ENCODE measurements at regions of chr13 and their contacts with region 1.

Region 1: GRCh38 chr13:50911937-50912795 is 2.6 kb downstream of the RNASEH2B start:
- DNase-seq: peak; percentile 82
- ATAC-seq: peak; percentile 58
- H3K4me3 Mint-ChIP-seq: peak overlapping the region; percentile 93
- H3K27ac Mint-ChIP-seq: peak overlapping the region; percentile 97
- H3K4me1 Mint-ChIP-seq: peaks cover 71% of the 10 kb centered on the region
- H3K27me3 Mint-ChIP-seq: no peaks in the 10 kb centered on the region
- CTCF ChIP-seq: no peak

Region 2: GRCh38 chr13:49792550-49793324 is 1119.4 kb before region 1 on chr13 and contains the start of gene KPNA3:
- CTCF ChIA-PET with region 1: interaction called, 3 read pairs
- POLR2A ChIA-PET with region 1: interaction called, 3 read pairs
- intact Hi-C with region 1: loop called (anchors 2 kb)
- DNase-seq: peak; percentile 88
- ATAC-seq: peak; percentile 89
- H3K4me3 Mint-ChIP-seq: peak within 1 kb of the TSS; percentile 97
- H3K27ac Mint-ChIP-seq: peak within 1 kb of the TSS; percentile 97
- H3K4me1 Mint-ChIP-seq: peaks cover 31% of the 10 kb centered on the region
- H3K27me3 Mint-ChIP-seq: no peaks in the 10 kb centered on the region
- CTCF ChIP-seq: no peak
- total RNA-seq, gene KPNA3: 28.6 and 28.7 TPM in 2 replicates

Region 3: DNA sequence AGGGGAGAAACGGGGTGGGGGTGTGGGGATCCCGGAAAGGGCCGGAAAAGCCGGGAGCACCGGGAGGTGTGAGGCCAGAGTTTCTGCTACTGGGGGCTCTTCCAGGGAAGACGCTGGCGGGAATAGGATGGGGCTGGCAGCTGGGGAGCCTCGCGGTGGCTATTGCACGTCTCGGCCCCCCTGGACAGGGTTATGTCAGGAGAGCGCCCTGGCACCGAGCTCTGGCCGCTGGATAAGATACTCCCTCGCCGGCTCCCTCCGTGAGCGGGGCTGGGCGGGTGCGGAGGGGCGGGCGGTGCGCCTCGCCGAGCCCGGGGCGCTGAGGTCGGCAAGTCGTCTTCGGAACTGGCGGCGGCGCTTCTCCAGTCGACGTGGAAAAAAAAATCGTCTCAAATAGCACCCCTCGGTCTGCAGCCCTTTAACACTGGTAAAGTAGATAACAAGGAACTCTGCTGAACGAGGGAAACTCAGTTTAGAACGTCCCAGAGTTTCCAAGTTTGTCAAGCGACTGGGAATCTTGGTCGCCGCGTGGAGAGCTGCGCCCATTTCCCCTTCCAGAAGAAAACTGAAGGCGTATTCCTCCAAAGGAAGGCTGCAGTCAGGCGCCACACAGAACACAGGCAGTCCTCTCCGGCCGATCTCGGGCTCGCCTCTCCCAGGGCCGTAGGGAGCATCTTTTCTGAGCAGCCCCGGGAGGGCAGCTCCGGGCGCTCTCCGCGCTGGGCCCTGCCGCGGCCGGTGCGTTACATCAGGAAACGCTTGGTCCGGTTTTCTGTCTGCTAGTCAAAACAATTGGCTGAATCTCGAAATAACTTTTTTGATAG is 781.8 kb before region 1 on chr13:
- CTCF ChIA-PET with region 1: interaction called, 23 read pairs
- POLR2A ChIA-PET with region 1: interaction called, 219 read pairs
- intact Hi-C with region 1: loop called (anchors 1 kb)
- DNase-seq: peak; percentile 54
- ATAC-seq: peak; percentile 36
- H3K4me3 Mint-ChIP-seq: peak overlapping the region; percentile 89
- H3K27ac Mint-ChIP-seq: peak overlapping the region; percentile 95
- H3K4me1 Mint-ChIP-seq: peaks cover 60% of the 10 kb centered on the region
- H3K27me3 Mint-ChIP-seq: peaks cover 16% of the 10 kb centered on the region
- CTCF ChIP-seq: no peak

Region 4: DNA sequence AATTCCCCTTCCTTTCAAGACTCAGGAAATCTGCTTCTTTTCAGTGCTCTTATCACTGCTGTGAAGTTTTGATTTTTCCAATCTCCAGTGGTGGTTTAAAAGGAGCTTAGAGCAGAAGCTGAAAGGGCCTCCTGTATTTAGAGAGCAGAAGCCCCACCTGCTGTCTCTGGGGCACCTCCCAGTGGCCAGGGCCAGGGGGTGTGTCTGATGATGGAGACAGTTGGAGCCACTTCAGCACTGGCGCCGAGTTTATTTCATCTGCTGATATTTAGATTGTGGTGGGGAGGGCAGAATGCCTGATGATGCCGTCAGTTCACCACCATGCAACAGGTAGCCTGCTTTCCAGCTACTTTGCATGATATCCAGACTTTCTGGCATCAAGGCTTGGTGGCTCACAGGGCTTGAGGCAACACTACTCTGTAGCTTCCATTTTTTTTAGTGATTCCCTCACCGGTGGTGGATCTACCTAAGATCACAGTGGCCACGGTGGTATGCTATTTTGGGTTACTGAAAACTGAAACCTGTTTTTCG is 525.0 kb before region 1 on chr13:
- CTCF ChIA-PET with region 1: interaction called, 6 read pairs
- POLR2A ChIA-PET with region 1: interaction called, 3 read pairs
- intact Hi-C with region 1: loop called (anchors 5 kb)
- DNase-seq: peak; percentile 28
- ATAC-seq: peak; percentile 81
- H3K4me3 Mint-ChIP-seq: no peak overlapping the region
- H3K27ac Mint-ChIP-seq: no peak overlapping the region
- H3K4me1 Mint-ChIP-seq: peaks cover 4% of the 10 kb centered on the region
- H3K27me3 Mint-ChIP-seq: no peaks in the 10 kb centered on the region
- CTCF ChIP-seq: no peak

Region 5: GRCh38 chr13:50635504-50635903 is 276.7 kb before region 1 on chr13:
- CTCF ChIA-PET with region 1: interaction called, 4 read pairs
- POLR2A ChIA-PET with region 1: interaction called, 8 read pairs
- intact Hi-C with region 1: loop called (anchors 1 kb)
- DNase-seq: no peak
- ATAC-seq: peak; percentile 75
- H3K4me3 Mint-ChIP-seq: peak overlapping the region; percentile 61
- H3K27ac Mint-ChIP-seq: peak overlapping the region; percentile 96
- H3K4me1 Mint-ChIP-seq: peaks cover 42% of the 10 kb centered on the region
- H3K27me3 Mint-ChIP-seq: no peaks in the 10 kb centered on the region
- CTCF ChIP-seq: no peak

Region 6: GRCh38 chr13:50720861-50721671 is 191.1 kb before region 1 on chr13:
- CTCF ChIA-PET with region 1: no interaction called
- POLR2A ChIA-PET with region 1: no interaction called
- intact Hi-C with region 1: no loop called
- DNase-seq: no peak
- ATAC-seq: no peak
- H3K4me3 Mint-ChIP-seq: no peak overlapping the region
- H3K27ac Mint-ChIP-seq: no peak overlapping the region
- H3K4me1 Mint-ChIP-seq: peaks cover 18% of the 10 kb centered on the region
- H3K27me3 Mint-ChIP-seq: no peaks in the 10 kb centered on the region
- CTCF ChIP-seq: no peak

Region 7: GRCh38 chr13:50893211-50893852 is 18.8 kb before region 1 on chr13:
- CTCF ChIA-PET with region 1: interaction called, 22 read pairs
- POLR2A ChIA-PET with region 1: interaction called, 103 read pairs
- intact Hi-C with region 1: loop called (anchors 1 kb)
- DNase-seq: no peak
- ATAC-seq: peak; percentile 79
- H3K4me3 Mint-ChIP-seq: peak overlapping the region; percentile 78
- H3K27ac Mint-ChIP-seq: peak overlapping the region; percentile 96
- H3K4me1 Mint-ChIP-seq: peaks cover 65% of the 10 kb centered on the region
- H3K27me3 Mint-ChIP-seq: no peaks in the 10 kb centered on the region
- CTCF ChIP-seq: no peak

Measured in activated B cell treated with CpG ODN at 0.5 μM for 24 hours (primary cell).